ENCODE measurements at regions of chr2 and their contacts with region 1.

Region 1: GRCh38 chr2:207769597-207770486 is at the start of gene FZD5:
- DNase-seq: peak; percentile 90
- ATAC-seq: peak; percentile 83
- H3K4me3 Mint-ChIP-seq: peak within 1 kb of the TSS; percentile 79
- H3K27ac Mint-ChIP-seq: no peak within 1 kb of the TSS
- H3K4me1 Mint-ChIP-seq: peaks cover 27% of the 10 kb centered on the region
- H3K27me3 Mint-ChIP-seq: peaks cover 41% of the 10 kb centered on the region
- total RNA-seq, gene FZD5: 1.1 to 1.3 TPM

Region 2: GRCh38 chr2:208025037-208025813 is 255.4 kb after region 1 on chr2 and contains the start of gene PLEKHM3:
- CTCF ChIA-PET with region 1: no interaction called
- POLR2A ChIA-PET with region 1: interaction called, 3 read pairs
- intact Hi-C with region 1: loop called in 1 of 2 experiments (anchors 2 kb)
- DNase-seq: peak; percentile 88
- ATAC-seq: peak; percentile 83
- H3K4me3 Mint-ChIP-seq: peak within 1 kb of the TSS; percentile 77
- H3K27ac Mint-ChIP-seq: peak within 1 kb of the TSS; percentile 94
- H3K4me1 Mint-ChIP-seq: peaks cover 12% of the 10 kb centered on the region
- H3K27me3 Mint-ChIP-seq: no peaks in the 10 kb centered on the region
- total RNA-seq, gene PLEKHM3: 4.5 to 5.2 TPM